CD4-positive, alpha-beta memory T cell (primary cell): ENCODE measurements at regions of chr1 and their contacts with region 1.

Region 1: GRCh38 chr1:116934586-116935207 is 25.0 kb downstream of the PTGFRN start:
- DNase-seq: peak in 4 of 5 donors; percentile 26 to 37 (median 34)
- H3K4me3 ChIP-seq: no peak overlapping the region
- H3K4me3 Mint-ChIP-seq: peak overlapping the region in 1 of 8 donors; percentile 39
- H3K27ac ChIP-seq: no peak overlapping the region
- H3K27ac Mint-ChIP-seq: peak overlapping the region in 6 of 7 donors; percentile 45 to 96 (median 88)
- H3K4me1 ChIP-seq: peaks cover 27% of the 10 kb centered on the region
- H3K4me1 Mint-ChIP-seq: peaks cover 18 to 26% (median 22%) of the 10 kb centered on the region in 4 donors
- H3K27me3 ChIP-seq: no peaks in the 10 kb centered on the region
- H3K27me3 Mint-ChIP-seq: no peaks in the 10 kb centered on the region

Region 2: GRCh38 chr1:116724765-116725375 is 209.8 kb before region 1 on chr1:
- CTCF ChIA-PET with region 1: interaction called, 9 read pairs
- POLR2A ChIA-PET with region 1: no interaction called
- intact Hi-C with region 1: loop called (anchors 2 kb)
- DNase-seq: peak; percentile 67 to 81 (median 73)
- H3K4me3 ChIP-seq: no peak overlapping the region
- H3K4me3 Mint-ChIP-seq: no peak overlapping the region
- H3K27ac ChIP-seq: no peak overlapping the region
- H3K27ac Mint-ChIP-seq: peak overlapping the region in 3 of 7 donors; percentile 1 to 47 (median 39)
- H3K4me1 ChIP-seq: peaks cover 13% of the 10 kb centered on the region
- H3K4me1 Mint-ChIP-seq: peaks cover 6 to 27% (median 12%) of the 10 kb centered on the region in 4 donors
- H3K27me3 ChIP-seq: no peaks in the 10 kb centered on the region
- H3K27me3 Mint-ChIP-seq: no peaks in the 10 kb centered on the region

Region 3: DNA sequence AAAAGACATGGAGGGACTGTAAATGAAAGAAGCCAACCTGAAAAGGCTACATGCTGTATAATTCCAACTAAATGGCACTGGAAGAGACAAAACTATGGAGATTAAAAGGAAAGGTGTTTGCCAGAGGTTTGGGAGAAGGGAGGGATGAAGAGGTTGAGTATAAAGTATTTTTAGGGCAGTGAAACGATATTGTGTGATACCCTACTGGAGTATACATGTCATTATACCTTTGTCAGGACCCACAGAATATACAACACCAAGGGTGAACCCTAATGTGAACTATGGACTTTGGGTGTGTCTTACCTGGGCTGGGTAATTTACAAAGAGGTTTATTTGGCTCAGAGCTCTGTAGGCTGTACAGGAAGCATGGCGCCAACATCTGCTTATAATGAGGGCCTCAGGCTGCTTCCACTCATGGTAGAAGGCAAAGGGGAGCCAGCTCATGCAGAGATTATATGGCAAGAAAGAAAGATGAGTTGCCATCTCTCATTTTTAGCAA is 107.0 kb before region 1 on chr1:
- CTCF ChIA-PET with region 1: no interaction called
- POLR2A ChIA-PET with region 1: no interaction called
- intact Hi-C with region 1: no loop called
- DNase-seq: no peak
- H3K4me3 ChIP-seq: no peak overlapping the region
- H3K4me3 Mint-ChIP-seq: peak overlapping the region in 3 of 8 donors; percentile 48 to 59 (median 48)
- H3K27ac ChIP-seq: no peak overlapping the region
- H3K27ac Mint-ChIP-seq: peak overlapping the region; percentile 71 to 90 (median 88)
- H3K4me1 ChIP-seq: peaks cover 21% of the 10 kb centered on the region
- H3K4me1 Mint-ChIP-seq: peaks cover 16 to 31% (median 24%) of the 10 kb centered on the region in 4 donors
- H3K27me3 ChIP-seq: no peaks in the 10 kb centered on the region
- H3K27me3 Mint-ChIP-seq: no peaks in the 10 kb centered on the region

Region 4: DNA sequence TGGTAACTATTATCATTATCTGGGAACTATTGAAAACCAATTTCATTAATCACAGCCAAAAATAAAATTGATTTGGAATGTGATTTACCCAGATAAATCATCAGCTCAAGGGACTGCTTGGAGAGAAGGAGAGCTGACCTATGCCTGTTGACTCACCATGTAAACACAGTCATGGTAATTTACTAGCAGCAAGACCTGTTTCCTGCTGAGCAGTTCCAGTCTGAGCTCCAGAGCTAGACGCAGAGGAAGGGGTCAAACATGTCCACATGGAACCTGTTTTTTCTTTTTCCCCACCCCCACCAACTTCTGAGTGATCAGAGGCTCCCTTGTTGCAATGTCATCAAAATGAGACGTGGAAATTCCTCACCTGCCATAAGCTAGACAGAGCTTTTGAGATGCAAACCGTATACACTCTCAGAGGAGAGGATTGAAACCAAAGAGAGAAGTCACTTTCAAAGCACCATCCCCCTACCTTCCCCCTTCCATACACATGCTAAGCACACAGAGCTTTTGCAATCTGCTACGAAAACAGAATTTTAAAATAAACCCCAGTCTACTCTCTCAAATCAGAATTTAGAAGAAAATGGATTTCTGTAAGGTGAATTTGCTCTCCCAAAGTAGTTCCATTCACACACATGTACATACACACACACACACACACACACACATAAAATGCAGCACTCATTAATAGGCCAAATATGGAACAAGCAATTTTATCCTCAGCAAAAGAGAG is 80.9 kb before region 1 on chr1:
- CTCF ChIA-PET with region 1: interaction called, 19 read pairs
- POLR2A ChIA-PET with region 1: no interaction called
- intact Hi-C with region 1: loop called (anchors 2 kb)
- DNase-seq: no peak
- H3K4me3 ChIP-seq: no peak overlapping the region
- H3K4me3 Mint-ChIP-seq: no peak overlapping the region
- H3K27ac ChIP-seq: no peak overlapping the region
- H3K27ac Mint-ChIP-seq: peak overlapping the region in 5 of 7 donors; percentile 8 to 85 (median 43)
- H3K4me1 ChIP-seq: peaks cover 4% of the 10 kb centered on the region
- H3K4me1 Mint-ChIP-seq: peaks cover 8 to 19% (median 15%) of the 10 kb centered on the region in 4 donors
- H3K27me3 ChIP-seq: no peaks in the 10 kb centered on the region
- H3K27me3 Mint-ChIP-seq: no peaks in the 10 kb centered on the region